ENCODE measurements at regions of chr3 and their contacts with region 1.

Region 1: DNA sequence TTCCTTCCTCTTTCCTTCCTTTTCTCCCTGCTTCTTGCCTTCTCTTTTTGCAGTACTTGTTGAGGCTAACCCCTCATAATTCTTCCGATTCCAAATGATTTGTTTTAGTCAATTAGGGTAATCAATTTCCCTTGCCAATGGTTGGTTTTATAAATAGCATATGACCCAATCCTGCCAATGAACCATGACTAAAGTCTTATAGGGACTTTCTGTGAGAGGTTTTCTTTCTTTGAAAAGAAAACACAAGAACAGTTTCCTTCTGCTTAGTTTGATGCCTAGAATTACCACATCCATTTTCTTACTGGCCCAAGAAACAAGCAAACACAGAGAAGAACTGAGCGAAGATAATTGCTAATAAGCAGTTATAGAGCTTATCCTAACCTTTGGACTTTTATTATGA is 292.5 kb upstream of the SATB1 start:
- DNase-seq: no peak
- H3K4me3 Mint-ChIP-seq: peak overlapping the region; percentile 13
- H3K27ac Mint-ChIP-seq: peak overlapping the region; percentile 96
- H3K4me1 Mint-ChIP-seq: peaks cover 70% of the 10 kb centered on the region
- H3K27me3 Mint-ChIP-seq: no peaks in the 10 kb centered on the region

Region 2: DNA sequence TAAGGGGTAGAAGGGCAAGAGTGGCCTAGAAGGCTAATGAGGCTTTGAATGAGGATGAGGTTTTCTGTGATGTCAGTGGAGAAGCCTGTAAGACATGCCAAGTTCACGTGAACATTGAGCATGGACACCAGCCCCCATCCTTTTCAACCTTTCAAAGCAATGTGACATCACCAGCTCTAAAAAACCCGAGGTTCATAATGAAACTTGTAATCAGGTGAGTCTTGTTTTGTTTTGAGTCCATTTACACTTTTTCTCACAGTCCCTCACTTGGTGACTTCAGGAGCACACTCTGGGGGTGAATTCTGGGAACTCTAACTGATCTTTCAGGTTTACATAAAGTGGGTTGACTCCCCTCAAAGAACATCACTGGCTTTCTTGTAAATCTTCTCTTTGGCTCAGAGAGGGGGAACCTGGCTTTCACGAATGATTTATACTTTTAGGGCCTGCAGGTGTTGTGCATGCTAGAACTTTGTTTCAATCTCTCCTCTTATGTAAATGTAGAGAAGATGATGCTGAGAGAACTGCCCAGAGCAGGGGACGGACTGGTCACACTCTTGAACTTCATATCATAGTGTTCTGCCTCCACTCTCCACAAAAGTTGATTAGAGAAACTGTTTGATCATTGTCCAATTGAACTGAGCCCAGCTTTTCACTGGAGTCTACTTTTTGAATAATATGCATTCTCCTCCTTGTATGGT is 67.8 kb before region 1 on chr3:
- CTCF ChIA-PET with region 1: interaction called, 10 read pairs
- POLR2A ChIA-PET with region 1: interaction called, 4 read pairs
- DNase-seq: peak; percentile 70
- H3K4me3 Mint-ChIP-seq: peak overlapping the region; percentile 9
- H3K27ac Mint-ChIP-seq: peak overlapping the region; percentile 88
- H3K4me1 Mint-ChIP-seq: peaks cover 76% of the 10 kb centered on the region
- H3K27me3 Mint-ChIP-seq: no peaks in the 10 kb centered on the region

Region 3: DNA sequence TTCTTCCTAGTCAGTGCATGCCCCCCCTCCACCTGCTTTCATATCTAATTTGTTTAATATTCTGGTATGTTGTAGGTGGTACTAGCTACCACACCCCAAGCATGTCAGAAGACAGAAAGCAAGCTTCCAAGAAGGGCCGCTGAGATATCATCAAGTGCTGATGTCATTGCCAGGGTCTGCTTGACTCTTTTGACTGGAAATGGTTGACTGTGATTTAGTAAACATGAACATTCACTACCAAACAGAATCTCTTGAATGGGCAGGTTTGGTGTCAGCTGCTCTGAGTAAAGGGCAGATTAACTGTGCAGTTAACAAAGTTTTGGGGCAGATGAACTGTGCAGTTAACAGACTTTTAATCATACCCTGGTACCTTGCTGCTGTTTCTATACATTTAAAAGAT is 48.2 kb before region 1 on chr3:
- CTCF ChIA-PET with region 1: interaction called, 12 read pairs
- POLR2A ChIA-PET with region 1: no interaction called
- DNase-seq: no peak
- H3K4me3 Mint-ChIP-seq: no peak overlapping the region
- H3K27ac Mint-ChIP-seq: no peak overlapping the region
- H3K4me1 Mint-ChIP-seq: peaks cover 50% of the 10 kb centered on the region
- H3K27me3 Mint-ChIP-seq: no peaks in the 10 kb centered on the region

Region 4: GRCh38 chr3:18679238-18679637 is 38.4 kb before region 1 on chr3:
- CTCF ChIA-PET with region 1: interaction called, 11 read pairs
- POLR2A ChIA-PET with region 1: no interaction called
- DNase-seq: peak; percentile 66
- H3K4me3 Mint-ChIP-seq: peak overlapping the region; percentile 64
- H3K27ac Mint-ChIP-seq: peak overlapping the region; percentile 98
- H3K4me1 Mint-ChIP-seq: peaks cover 78% of the 10 kb centered on the region
- H3K27me3 Mint-ChIP-seq: no peaks in the 10 kb centered on the region

Region 5: GRCh38 chr3:18703798-18704197 is 13.8 kb before region 1 on chr3:
- CTCF ChIA-PET with region 1: interaction called, 14 read pairs
- POLR2A ChIA-PET with region 1: no interaction called
- DNase-seq: no peak
- H3K4me3 Mint-ChIP-seq: no peak overlapping the region
- H3K27ac Mint-ChIP-seq: no peak overlapping the region
- H3K4me1 Mint-ChIP-seq: peaks cover 13% of the 10 kb centered on the region
- H3K27me3 Mint-ChIP-seq: no peaks in the 10 kb centered on the region